ENCODE measurements at regions of chr22 and their contacts with region 1.

Region 1: GRCh38 chr22:42090596-42091454 is at the start of gene NDUFA6:
- DNase-seq: peak; percentile 100
- ATAC-seq: peak; percentile 97 to 99
- H3K4me3 ChIP-seq: peak within 1 kb of the TSS; percentile 81 to 99 (median 95)
- H3K27ac ChIP-seq: peak within 1 kb of the TSS; percentile 98 to 100 (median 98)
- H3K4me1 ChIP-seq: peaks cover 24 to 38% of the 10 kb centered on the region in 2 donors
- H3K27me3 ChIP-seq: no peaks in the 10 kb centered on the region
- CTCF ChIP-seq: peak; percentile 92 to 96 (median 96)
- POLR2A ChIP-seq: peak; percentile 95 to 97
- total RNA-seq, gene NDUFA6: 117 to 139 (median 125) TPM

Region 2: DNA sequence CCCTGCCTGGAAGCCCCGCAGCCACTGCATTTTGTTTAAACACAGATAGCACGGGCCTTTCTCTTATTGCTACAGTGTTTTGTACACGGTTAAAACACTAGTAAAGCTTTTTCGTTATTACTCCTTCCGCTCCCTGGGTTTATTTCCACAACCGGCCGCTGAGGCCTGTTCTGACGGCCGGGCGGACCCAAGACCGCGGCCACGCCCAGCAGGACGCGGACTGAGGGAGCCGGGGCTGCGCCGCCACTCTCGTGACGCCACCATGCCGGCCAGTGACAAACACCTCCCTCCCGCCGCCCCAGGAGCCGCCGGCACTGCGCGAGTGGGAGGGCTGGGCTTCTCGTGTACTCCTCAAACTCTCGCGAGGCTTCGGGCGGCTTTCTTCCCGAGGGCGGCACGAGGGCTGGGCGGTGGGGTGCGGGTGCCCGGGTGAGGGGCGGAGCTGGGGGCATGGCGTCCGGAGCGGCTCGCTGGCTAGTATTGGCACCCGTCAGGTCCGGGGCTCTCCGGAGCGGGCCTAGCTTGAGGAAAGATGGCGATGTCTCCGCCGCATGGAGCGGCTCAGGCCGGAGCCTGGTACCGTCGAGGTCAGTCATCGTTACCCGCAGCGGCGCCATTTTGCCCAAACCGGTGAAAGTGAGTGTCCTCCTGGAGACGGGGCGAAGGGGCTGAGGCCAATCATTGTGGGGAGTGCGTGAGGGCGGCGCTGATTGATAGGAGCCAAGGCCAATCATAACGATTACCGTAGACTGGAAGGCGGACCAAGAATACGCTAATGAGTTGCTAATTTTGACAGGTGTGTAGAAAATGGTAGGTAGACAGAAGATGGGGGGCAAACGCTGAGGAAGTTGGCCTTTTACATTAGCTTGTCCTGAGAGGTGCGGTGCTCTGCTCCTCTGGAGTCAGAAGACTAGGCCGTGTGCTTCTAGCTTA is 11.2 kb before region 1 on chr22 and contains the start of gene SMDT1:
- in situ Hi-C with region 1: no loop called
- intact Hi-C with region 1: loop called (anchors 1 kb)
- DNase-seq: peak; percentile 99
- ATAC-seq: peak; percentile 92 to 94
- H3K4me3 ChIP-seq: peak within 1 kb of the TSS; percentile 69 to 89 (median 86)
- H3K27ac ChIP-seq: peak within 1 kb of the TSS; percentile 95 to 100 (median 100)
- H3K4me1 ChIP-seq: peaks cover 30 to 37% of the 10 kb centered on the region in 2 donors
- H3K27me3 ChIP-seq: no peaks in the 10 kb centered on the region
- CTCF ChIP-seq: peak in 1 of 5 experiments; percentile 26
- POLR2A ChIP-seq: peak; percentile 97
- total RNA-seq, gene SMDT1: 7.9 to 14.6 (median 9.8) TPM

Region 3: GRCh38 chr22:42114721-42115120 is 23.9 kb after region 1 on chr22:
- in situ Hi-C with region 1: no loop called
- intact Hi-C with region 1: loop called (anchors 1 kb)
- DNase-seq: no peak
- ATAC-seq: no peak
- H3K4me3 ChIP-seq: no peak overlapping the region
- H3K27ac ChIP-seq: no peak overlapping the region
- H3K4me1 ChIP-seq: peaks cover 6 to 8% of the 10 kb centered on the region in 2 donors
- H3K27me3 ChIP-seq: no peaks in the 10 kb centered on the region
- CTCF ChIP-seq: peak in 1 of 5 experiments; percentile 38
- POLR2A ChIP-seq: no peak

Region 4: GRCh38 chr22:42270512-42271417 is 179.9 kb after region 1 on chr22 and contains the start of gene TCF20:
- in situ Hi-C with region 1: loop called in 1 of 4 experiments (anchors 10 kb)
- intact Hi-C with region 1: no loop called
- DNase-seq: peak; percentile 50 to 61
- ATAC-seq: peak; percentile 90 to 93
- H3K4me3 ChIP-seq: peak within 1 kb of the TSS; percentile 98 to 100 (median 98)
- H3K27ac ChIP-seq: peak within 1 kb of the TSS; percentile 87 to 90 (median 88)
- H3K4me1 ChIP-seq: peaks cover 13 to 16% of the 10 kb centered on the region in 2 donors
- H3K27me3 ChIP-seq: no peaks in the 10 kb centered on the region
- CTCF ChIP-seq: no peak
- POLR2A ChIP-seq: no peak
- total RNA-seq, gene TCF20: 9.9 to 14.4 (median 12.4) TPM

Region 5: DNA sequence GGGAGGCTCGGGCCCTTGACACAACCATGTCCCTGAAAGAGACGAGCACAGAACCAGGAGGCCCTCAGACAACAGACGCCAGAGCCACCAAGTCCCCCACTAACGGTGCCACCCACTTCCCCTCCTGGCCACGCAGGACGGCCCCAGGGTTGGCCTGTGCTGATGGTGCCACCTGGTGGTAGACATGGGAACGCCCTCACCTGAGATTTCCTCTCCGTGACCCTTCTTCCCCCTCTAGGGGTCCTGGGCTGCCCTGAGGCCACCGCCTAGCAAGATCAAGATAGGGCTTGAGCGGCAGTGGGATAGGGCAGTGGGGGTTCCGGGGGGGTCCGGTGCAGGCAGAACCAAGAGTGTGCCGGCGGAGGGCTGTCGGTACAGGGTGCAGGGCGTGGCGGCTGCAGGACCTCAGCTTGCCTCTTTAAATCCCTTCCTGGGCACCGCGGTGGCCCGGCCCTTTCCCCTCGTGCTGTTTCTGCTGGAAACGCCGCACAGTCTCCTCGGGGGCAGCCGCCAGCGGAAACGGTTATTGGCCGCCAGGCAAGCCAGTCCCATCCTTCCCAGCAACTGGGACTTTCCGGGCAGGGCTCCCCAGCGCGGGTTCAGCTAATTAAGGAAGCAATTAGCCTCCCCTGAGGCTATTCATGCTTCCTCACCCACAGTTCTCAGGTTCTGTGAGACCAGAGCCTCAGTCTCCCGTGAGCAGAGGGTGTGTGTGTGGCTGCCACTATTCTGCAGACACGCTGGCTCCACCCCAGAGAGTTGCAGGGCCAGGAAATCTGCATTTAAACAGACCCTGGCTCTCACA is 346.9 kb after region 1 on chr22:
- in situ Hi-C with region 1: loop called in 3 of 4 experiments (anchors 10 to 25 kb)
- intact Hi-C with region 1: loop called (anchors 1 kb)
- DNase-seq: peak; percentile 40 to 54
- ATAC-seq: peak; percentile 78 to 91
- H3K4me3 ChIP-seq: peak overlapping the region; percentile 21 to 53 (median 38)
- H3K27ac ChIP-seq: no peak overlapping the region
- H3K4me1 ChIP-seq: peaks cover 6 to 7% of the 10 kb centered on the region in 2 donors
- H3K27me3 ChIP-seq: peaks cover 15 to 22% (median 16%) of the 10 kb centered on the region in 3 donors
- CTCF ChIP-seq: peak; percentile 92 to 97 (median 95)
- POLR2A ChIP-seq: no peak